ENCODE measurements at regions of chr5 and their contacts with region 1.

Region 1: DNA sequence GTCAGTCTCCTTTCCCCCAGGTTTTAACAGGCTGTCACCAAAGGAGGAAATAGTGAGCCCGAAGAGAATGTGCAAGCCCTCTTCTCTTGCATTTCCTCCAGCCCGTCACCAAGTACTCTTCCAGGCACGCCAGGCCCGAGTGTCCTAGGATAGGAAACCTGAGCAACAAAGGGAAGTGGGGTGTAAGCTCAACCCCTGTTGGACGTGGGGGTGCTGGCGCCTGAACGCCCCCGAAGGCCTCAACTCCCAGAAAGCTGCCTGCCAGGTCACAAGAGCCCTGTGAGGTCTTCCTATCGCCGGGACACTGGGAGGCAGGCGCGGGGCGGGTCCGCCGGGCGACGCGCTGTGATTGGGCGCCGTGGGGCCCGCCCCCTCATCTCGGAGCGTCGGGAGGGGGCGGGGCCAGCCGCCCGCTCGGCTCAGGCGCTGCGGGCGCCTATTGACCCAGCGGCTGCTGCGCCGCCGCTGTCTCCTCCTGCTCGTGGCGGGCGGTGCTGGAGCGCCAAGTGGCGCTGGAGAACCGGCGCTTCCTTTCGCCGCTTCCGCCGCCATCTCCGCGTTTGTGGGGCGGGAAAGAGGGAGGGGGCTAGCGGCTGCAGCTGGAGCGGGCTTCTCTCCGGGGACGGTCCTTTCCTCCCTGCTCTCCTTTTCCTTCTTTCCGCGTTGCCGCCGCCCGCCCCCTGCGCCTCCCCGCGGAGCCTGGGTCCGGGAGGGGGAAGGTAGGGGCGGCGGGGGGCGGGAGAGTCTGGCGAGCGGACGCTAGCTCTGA is 572 bp upstream of the MAN2A1 start:
- DNase-seq: peak; percentile 89
- ATAC-seq: peak; percentile 89
- H3K4me3 ChIP-seq: peak overlapping the region; percentile 84 to 91 (median 89)
- H3K27ac ChIP-seq: peak overlapping the region; percentile 90
- H3K4me1 ChIP-seq: peaks cover 38% of the 10 kb centered on the region
- H3K27me3 ChIP-seq: no peaks in the 10 kb centered on the region; a peak in 1 of 5 replicates
- CTCF ChIP-seq: no peak; the same call in none of the 2 replicates
- EP300 ChIP-seq: no peak
- POLR2A ChIP-seq: peak; percentile 92 to 94
- RAD21 ChIP-seq: peak; percentile 49; the same call in 1 of the 2 replicates

Region 2: GRCh38 chr5:108642167-108642906 is 1046.8 kb before region 1 on chr5:
- CTCF ChIA-PET with region 1: no interaction called
- POLR2A ChIA-PET with region 1: no interaction called
- in situ Hi-C with region 1: no loop called
- intact Hi-C with region 1: loop called (anchors 5 kb)
- DNase-seq: peak; percentile 53
- ATAC-seq: peak; percentile 100
- H3K4me3 ChIP-seq: 0 out of 6 replicates have a peak overlapping the region, but pooled peaks of 1 of the 3 experiments have one; percentile 35
- H3K27ac ChIP-seq: no peak overlapping the region
- H3K4me1 ChIP-seq: peaks cover 5% of the 10 kb centered on the region; the same call in 1 of the 2 replicates
- H3K27me3 ChIP-seq: 0 out of 5 replicates have a peak, but pooled peaks cover 0 to 4% of the 10 kb centered on the region in 2 experiments
- CTCF ChIP-seq: peak; percentile 88
- EP300 ChIP-seq: no peak
- POLR2A ChIP-seq: no peak
- RAD21 ChIP-seq: peak; percentile 61; the same call in 1 of the 2 replicates

Region 3: GRCh38 chr5:109409844-109410388 is 279.2 kb before region 1 on chr5 and contains the start of gene PJA2:
- CTCF ChIA-PET with region 1: no interaction called
- POLR2A ChIA-PET with region 1: interaction called, 10 read pairs
- in situ Hi-C with region 1: no loop called
- intact Hi-C with region 1: loop called (anchors 2 kb)
- DNase-seq: peak; percentile 99
- ATAC-seq: peak; percentile 90
- H3K4me3 ChIP-seq: peak within 1 kb of the TSS; percentile 73 to 98 (median 97)
- H3K27ac ChIP-seq: peak within 1 kb of the TSS; percentile 98
- H3K4me1 ChIP-seq: peaks cover 59% of the 10 kb centered on the region
- H3K27me3 ChIP-seq: no peaks in the 10 kb centered on the region; a peak in 1 of 5 replicates
- CTCF ChIP-seq: no peak; the same call in 1 of the 2 replicates
- EP300 ChIP-seq: no peak; a peak in 1 of 4 replicates
- POLR2A ChIP-seq: peak in 1 of 2 experiments; percentile 55; a peak in 2 of 4 replicates
- RAD21 ChIP-seq: no peak
- total RNA-seq, gene PJA2: 39.4 and 70.7 TPM in 2 replicates

Region 4: GRCh38 chr5:109660301-109660700 is 28.9 kb before region 1 on chr5:
- CTCF ChIA-PET with region 1: no interaction called
- POLR2A ChIA-PET with region 1: no interaction called
- in situ Hi-C with region 1: no loop called
- intact Hi-C with region 1: no loop called
- DNase-seq: no peak
- ATAC-seq: no peak
- H3K4me3 ChIP-seq: no peak overlapping the region
- H3K27ac ChIP-seq: no peak overlapping the region
- H3K4me1 ChIP-seq: no peaks in the 10 kb centered on the region
- H3K27me3 ChIP-seq: no peaks in the 10 kb centered on the region; a peak in 1 of 5 replicates
- CTCF ChIP-seq: no peak
- EP300 ChIP-seq: no peak
- POLR2A ChIP-seq: no peak
- RAD21 ChIP-seq: no peak

Region 5: GRCh38 chr5:109707531-109707930 is 18.4 kb after region 1 on chr5:
- CTCF ChIA-PET with region 1: no interaction called
- POLR2A ChIA-PET with region 1: interaction called, 10 read pairs
- in situ Hi-C with region 1: no loop called
- intact Hi-C with region 1: no loop called
- DNase-seq: peak; percentile 61
- ATAC-seq: peak; percentile 88
- H3K4me3 ChIP-seq: no peak overlapping the region
- H3K27ac ChIP-seq: peak overlapping the region; percentile 29
- H3K4me1 ChIP-seq: peaks cover 44% of the 10 kb centered on the region
- H3K27me3 ChIP-seq: no peaks in the 10 kb centered on the region
- CTCF ChIP-seq: no peak
- EP300 ChIP-seq: no peak
- POLR2A ChIP-seq: no peak
- RAD21 ChIP-seq: no peak

Region 6: GRCh38 chr5:109826426-109826825 is 137.3 kb after region 1 on chr5:
- CTCF ChIA-PET with region 1: no interaction called
- POLR2A ChIA-PET with region 1: no interaction called
- in situ Hi-C with region 1: no loop called
- intact Hi-C with region 1: loop called (anchors 5 kb)
- DNase-seq: no peak
- ATAC-seq: no peak
- H3K4me3 ChIP-seq: no peak overlapping the region
- H3K27ac ChIP-seq: no peak overlapping the region
- H3K4me1 ChIP-seq: no peaks in the 10 kb centered on the region
- H3K27me3 ChIP-seq: no peaks in the 10 kb centered on the region
- CTCF ChIP-seq: no peak
- EP300 ChIP-seq: no peak
- POLR2A ChIP-seq: no peak
- RAD21 ChIP-seq: no peak

Region 7: GRCh38 chr5:110105692-110106091 is 416.5 kb after region 1 on chr5:
- CTCF ChIA-PET with region 1: no interaction called
- POLR2A ChIA-PET with region 1: no interaction called
- in situ Hi-C with region 1: no loop called
- intact Hi-C with region 1: loop called (anchors 1 kb)
- DNase-seq: peak; percentile 79
- ATAC-seq: peak; percentile 63
- H3K4me3 ChIP-seq: no peak overlapping the region; a peak in 1 of 6 replicates
- H3K27ac ChIP-seq: no peak overlapping the region
- H3K4me1 ChIP-seq: peaks cover 65% of the 10 kb centered on the region
- H3K27me3 ChIP-seq: no peaks in the 10 kb centered on the region
- CTCF ChIP-seq: no peak
- EP300 ChIP-seq: no peak; a peak in 1 of 4 replicates
- POLR2A ChIP-seq: no peak
- RAD21 ChIP-seq: no peak

Measured in HepG2 (cell line).